Activated B cell treated with CpG ODN at 0.5 μM for 24 hours (primary cell): ENCODE measurements at regions of chr1 and their contacts with region 1.

Region 1: DNA sequence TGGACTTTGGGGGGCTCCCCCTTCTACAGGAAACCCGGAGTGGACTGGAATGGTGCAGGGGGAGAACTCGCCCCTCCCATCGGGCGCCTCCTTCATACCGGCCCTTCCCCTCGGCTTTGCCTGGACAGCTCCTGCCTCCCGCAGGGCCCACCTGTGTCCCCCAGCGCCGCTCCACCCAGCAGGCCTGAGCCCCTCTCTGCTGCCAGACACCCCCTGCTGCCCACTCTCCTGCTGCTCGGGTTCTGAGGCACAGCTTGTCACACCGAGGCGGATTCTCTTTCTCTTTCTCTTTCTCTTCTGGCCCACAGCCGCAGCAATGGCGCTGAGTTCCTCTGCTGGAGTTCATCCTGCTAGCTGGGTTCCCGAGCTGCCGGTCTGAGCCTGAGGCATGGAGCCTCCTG is at the start of gene TNFRSF14:
- DNase-seq: peak; percentile 62
- ATAC-seq: peak; percentile 61
- H3K4me3 Mint-ChIP-seq: peak within 1 kb of the TSS; percentile 95
- H3K27ac Mint-ChIP-seq: peak within 1 kb of the TSS; percentile 96
- H3K4me1 Mint-ChIP-seq: peaks cover 48% of the 10 kb centered on the region
- H3K27me3 Mint-ChIP-seq: no peaks in the 10 kb centered on the region
- CTCF ChIP-seq: no peak
- total RNA-seq, gene TNFRSF14: 140 and 148 TPM in 2 replicates

Region 2: DNA sequence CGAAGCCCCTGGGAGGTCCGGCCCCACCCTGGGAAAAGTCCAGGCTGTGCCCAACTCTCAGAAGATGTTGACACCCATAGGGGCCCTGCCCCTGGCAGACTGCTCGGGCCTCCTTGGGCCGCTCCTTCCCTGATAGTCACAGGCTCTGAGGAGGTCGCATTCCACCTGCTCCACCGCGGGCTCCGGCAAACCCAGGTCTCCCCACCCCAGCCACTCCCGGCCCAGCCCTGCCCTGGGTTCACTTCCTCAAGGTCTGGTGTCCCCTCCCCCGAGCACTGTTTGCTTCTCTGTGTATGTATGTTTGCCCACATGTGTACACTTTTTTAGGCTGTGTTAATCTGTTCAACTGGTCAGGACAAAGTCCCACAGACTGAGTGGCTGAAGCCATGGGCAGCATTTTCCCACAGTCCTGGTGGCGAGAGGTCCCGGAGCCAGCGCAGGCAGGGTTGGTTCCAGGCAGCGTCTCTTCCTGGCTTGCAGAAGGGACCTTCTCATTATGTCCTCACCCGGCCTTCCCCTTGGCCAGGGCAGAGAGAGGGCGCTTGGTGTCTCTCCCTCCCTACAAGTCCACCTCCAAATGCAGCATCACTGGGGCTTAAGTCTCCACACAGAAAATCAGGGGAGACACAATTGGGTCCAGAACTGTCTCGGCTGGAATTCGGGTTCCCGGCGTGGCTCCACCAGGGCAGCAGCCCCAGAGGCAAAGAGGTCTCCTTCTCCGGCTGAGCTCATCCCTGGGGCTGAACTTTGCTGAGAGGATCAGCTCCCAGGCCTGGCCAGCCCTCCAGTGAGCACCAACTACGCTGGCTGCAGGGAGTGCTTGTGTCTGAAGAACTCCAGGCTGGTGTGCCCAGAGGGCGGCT is 19.8 kb after region 1 on chr1:
- CTCF ChIA-PET with region 1: interaction called, 4 read pairs
- POLR2A ChIA-PET with region 1: interaction called, 224 read pairs
- intact Hi-C with region 1: loop called (anchors 1 kb)
- DNase-seq: no peak
- ATAC-seq: no peak
- H3K4me3 Mint-ChIP-seq: peak overlapping the region; percentile 78
- H3K27ac Mint-ChIP-seq: peak overlapping the region; percentile 95
- H3K4me1 Mint-ChIP-seq: peaks cover 72% of the 10 kb centered on the region
- H3K27me3 Mint-ChIP-seq: no peaks in the 10 kb centered on the region
- CTCF ChIP-seq: no peak

Region 3: GRCh38 chr1:2642560-2643413 is 86.5 kb after region 1 on chr1:
- CTCF ChIA-PET with region 1: no interaction called
- POLR2A ChIA-PET with region 1: interaction called, 7 read pairs
- intact Hi-C with region 1: loop called (anchors 1 kb)
- DNase-seq: peak; percentile 92
- ATAC-seq: peak; percentile 79
- H3K4me3 Mint-ChIP-seq: peak overlapping the region; percentile 80
- H3K27ac Mint-ChIP-seq: peak overlapping the region; percentile 73
- H3K4me1 Mint-ChIP-seq: peaks cover 11% of the 10 kb centered on the region
- H3K27me3 Mint-ChIP-seq: peaks cover 3% of the 10 kb centered on the region
- CTCF ChIP-seq: no peak

Region 4: DNA sequence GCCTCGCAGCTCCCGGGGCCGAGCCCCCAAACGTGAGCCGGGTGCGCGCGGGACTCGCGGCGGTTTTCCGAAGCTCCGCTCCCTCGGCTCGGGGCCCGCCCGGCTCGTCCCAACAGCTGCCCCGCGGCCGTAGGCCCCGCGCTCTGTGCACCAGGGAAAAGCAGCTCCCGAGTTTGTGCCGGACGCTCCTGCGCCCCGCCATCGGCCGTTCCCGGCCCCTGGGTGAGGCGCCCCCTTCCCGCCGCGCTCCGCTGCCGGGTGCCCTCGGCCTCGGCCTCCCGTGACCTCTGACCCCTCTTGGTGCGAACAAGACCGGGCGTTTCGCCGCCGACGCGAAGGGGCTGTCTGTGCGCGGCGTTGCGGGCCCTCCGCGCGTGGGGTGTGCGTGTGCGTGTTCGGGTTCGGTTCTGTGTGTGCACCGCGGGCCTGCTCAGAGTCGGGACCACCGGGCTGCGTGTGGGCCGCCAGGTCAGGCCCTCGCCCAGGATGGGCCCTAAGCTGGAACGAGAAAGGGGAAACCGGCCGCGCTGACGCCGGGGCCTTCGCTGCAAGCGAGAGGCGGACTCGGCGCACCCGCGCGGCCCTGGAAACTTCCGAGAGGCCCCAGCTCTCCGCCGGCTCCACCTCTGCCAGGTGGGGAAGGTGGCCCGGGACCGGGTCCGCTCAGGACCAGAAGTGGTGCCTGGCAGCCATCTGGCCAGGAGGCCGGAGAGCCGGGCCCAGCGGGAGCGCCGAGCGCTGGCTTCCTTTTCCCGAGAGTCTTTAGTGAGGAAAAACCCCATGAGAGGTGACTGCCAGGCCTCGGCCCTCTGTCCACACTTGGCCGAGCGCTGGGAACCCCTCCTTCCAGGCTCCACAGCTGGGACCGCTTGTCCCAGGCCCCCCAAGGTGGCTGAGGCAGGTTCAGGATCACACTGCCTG is 514.6 kb after region 1 on chr1:
- CTCF ChIA-PET with region 1: no interaction called
- POLR2A ChIA-PET with region 1: no interaction called
- intact Hi-C with region 1: no loop called
- DNase-seq: no peak
- ATAC-seq: no peak
- H3K4me3 Mint-ChIP-seq: peak overlapping the region; percentile 50
- H3K27ac Mint-ChIP-seq: no peak overlapping the region
- H3K4me1 Mint-ChIP-seq: peaks cover 4% of the 10 kb centered on the region
- H3K27me3 Mint-ChIP-seq: peaks cover 20% of the 10 kb centered on the region
- CTCF ChIP-seq: no peak